ENCODE measurements at regions of chr10 and their contacts with region 1.

Region 1: GRCh38 chr10:102101152-102101551 is 19.0 kb downstream of the LDB1 start:
- DNase-seq: no peak
- CTCF ChIP-seq: no peak

Region 2: DNA sequence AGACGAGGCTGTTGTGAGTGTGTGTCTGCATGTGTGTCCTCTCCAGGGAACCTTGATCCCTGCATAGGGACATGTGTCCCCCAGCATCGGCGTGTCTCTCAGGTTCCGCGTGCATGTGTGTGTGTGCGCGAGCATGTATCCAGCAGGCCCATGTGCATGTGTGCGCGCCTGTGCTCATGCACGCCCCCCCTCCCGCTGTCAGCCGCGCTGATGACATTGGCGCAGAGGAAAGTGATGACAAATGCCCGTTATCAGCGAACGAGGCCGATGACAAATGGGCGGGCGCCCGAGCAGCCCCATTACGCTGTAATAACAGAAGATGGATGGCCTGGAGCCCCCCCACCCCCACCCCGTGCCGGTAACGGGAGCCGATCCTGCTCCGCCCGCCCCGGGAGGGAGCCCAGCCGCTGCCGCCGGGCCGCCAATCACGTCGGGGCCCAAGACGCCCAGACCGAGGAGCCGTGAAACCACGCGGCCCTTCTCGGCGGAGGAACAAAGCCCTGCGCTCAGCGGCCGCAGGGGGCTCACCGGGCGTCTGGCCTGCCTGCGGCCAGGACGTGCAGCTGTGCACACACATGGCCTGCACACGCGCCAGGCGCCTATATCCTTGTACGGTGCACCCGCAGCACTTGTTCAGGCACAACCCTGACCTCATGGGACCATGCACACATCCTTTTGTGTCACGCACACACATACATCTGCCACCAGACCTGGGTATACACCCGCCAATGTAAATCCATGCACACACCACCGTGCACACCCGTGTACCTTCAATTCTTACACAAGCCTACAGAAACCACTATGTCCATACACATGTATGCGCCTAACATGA is 534.6 kb before region 1 on chr10:
- CTCF ChIA-PET with region 1: no interaction called
- POLR2A ChIA-PET with region 1: no interaction called
- DNase-seq: peak; percentile 65
- CTCF ChIP-seq: no peak

Region 3: GRCh38 chr10:102114861-102115618 is 13.9 kb after region 1 on chr10:
- CTCF ChIA-PET with region 1: interaction called, 13 read pairs
- POLR2A ChIA-PET with region 1: interaction called, 3 read pairs
- DNase-seq: peak; percentile 90
- CTCF ChIP-seq: no peak

Region 4: GRCh38 chr10:102220612-102221011 is 119.5 kb after region 1 on chr10:
- CTCF ChIA-PET with region 1: no interaction called
- POLR2A ChIA-PET with region 1: no interaction called
- DNase-seq: no peak
- CTCF ChIP-seq: no peak